ENCODE measurements at regions of chr19 and their contacts with region 1.

Region 1: GRCh38 chr19:58475714-58476497 is at the start of gene ZNF446:
- DNase-seq: peak; percentile 98
- H3K4me3 Mint-ChIP-seq: peak within 1 kb of the TSS; percentile 93
- H3K27ac Mint-ChIP-seq: peak within 1 kb of the TSS; percentile 99
- H3K4me1 Mint-ChIP-seq: peaks cover 16% of the 10 kb centered on the region
- H3K27me3 Mint-ChIP-seq: no peaks in the 10 kb centered on the region
- total RNA-seq, gene ZNF446: 6.4 to 7.5 TPM

Region 2: DNA sequence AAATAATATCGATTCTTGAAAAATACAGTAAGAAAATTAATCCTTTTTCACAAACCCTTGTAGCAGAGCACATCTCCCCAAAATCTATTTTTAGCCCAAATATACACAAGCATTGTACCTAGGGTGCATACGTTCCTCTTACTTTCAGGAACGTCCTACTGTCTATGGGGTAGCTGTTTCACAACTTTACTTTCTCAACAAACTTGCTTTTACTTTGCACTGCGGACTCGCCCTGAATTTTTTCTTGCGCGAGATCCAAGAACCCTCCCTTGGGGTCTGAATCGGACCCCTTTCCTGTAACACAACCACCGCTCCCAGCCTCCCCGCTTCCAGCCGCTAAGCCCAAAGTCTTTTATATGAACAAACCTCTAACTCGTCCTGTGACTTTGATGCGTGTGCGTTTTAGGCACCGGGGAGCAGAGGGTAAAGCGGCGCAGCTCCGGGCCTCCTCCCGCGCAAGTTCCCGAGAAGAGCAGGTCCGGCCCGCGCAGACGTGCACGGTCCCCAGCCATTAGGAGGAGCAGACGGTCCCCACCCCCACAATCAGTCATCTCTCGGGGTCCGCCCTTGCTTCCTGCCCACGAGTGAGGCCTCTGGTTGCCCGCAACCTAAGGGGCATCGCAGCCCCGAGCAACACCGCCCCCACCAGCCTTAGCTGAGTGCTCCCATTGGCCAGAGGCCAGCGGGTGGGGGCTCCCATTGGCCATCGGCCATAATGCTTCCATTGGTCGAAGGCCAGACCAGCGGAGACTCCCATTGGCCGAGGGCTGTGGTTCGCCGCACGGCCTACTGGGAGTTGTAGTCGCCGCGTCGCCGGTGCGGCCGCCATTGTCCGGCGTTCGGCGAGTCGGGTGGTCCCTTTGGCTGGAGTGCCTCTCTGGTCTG is 197.5 kb before region 1 on chr19 and contains the start of gene ZNF8:
- CTCF ChIA-PET with region 1: no interaction called
- POLR2A ChIA-PET with region 1: no interaction called
- intact Hi-C with region 1: loop called (anchors 2 kb)
- DNase-seq: peak; percentile 99
- H3K4me3 Mint-ChIP-seq: peak within 1 kb of the TSS; percentile 83
- H3K27ac Mint-ChIP-seq: peak within 1 kb of the TSS; percentile 95
- H3K4me1 Mint-ChIP-seq: peaks cover 35% of the 10 kb centered on the region
- H3K27me3 Mint-ChIP-seq: no peaks in the 10 kb centered on the region
- total RNA-seq, gene ZNF8: 3.7 to 3.9 TPM

Region 3: GRCh38 chr19:58439576-58440554 is 36.0 kb before region 1 on chr19 and contains the start of gene ZNF132:
- CTCF ChIA-PET with region 1: no interaction called
- POLR2A ChIA-PET with region 1: no interaction called
- intact Hi-C with region 1: loop called (anchors 1 kb)
- DNase-seq: peak; percentile 97
- H3K4me3 Mint-ChIP-seq: peak within 1 kb of the TSS; percentile 84
- H3K27ac Mint-ChIP-seq: peak within 1 kb of the TSS; percentile 71
- H3K4me1 Mint-ChIP-seq: peaks cover 25% of the 10 kb centered on the region
- H3K27me3 Mint-ChIP-seq: no peaks in the 10 kb centered on the region
- total RNA-seq, gene ZNF132: 3.1 to 3.6 TPM

Region 4: DNA sequence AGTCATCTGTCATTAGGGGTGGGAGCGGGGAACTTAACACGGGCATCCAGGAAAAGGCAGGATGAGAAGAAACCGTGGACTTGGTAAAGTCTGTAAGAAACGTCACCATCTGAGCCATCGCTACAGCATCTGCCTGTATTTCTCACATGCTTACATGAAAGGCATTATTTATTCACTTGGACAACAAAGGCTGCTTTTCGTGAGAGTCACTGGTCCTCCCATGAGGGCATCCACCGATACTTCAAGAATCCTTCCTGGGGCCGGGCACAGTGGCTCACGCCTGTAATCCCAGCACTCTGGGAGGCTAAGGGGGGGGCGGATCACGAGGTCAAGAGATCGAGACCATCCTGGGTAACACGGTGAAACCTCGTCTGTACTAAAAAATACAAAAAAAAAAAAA is 16.4 kb after region 1 on chr19:
- CTCF ChIA-PET with region 1: no interaction called
- POLR2A ChIA-PET with region 1: interaction called, 11 read pairs
- intact Hi-C with region 1: loop called (anchors 1 kb)
- DNase-seq: no peak
- H3K4me3 Mint-ChIP-seq: no peak overlapping the region
- H3K27ac Mint-ChIP-seq: no peak overlapping the region
- H3K4me1 Mint-ChIP-seq: peaks cover 30% of the 10 kb centered on the region
- H3K27me3 Mint-ChIP-seq: no peaks in the 10 kb centered on the region

Region 5: GRCh38 chr19:58531034-58531840 is 55.3 kb after region 1 on chr19:
- CTCF ChIA-PET with region 1: no interaction called
- POLR2A ChIA-PET with region 1: no interaction called
- intact Hi-C with region 1: no loop called
- DNase-seq: no peak
- H3K4me3 Mint-ChIP-seq: no peak overlapping the region
- H3K27ac Mint-ChIP-seq: no peak overlapping the region
- H3K4me1 Mint-ChIP-seq: no peaks in the 10 kb centered on the region
- H3K27me3 Mint-ChIP-seq: peaks cover 4% of the 10 kb centered on the region

Region 6: GRCh38 chr19:58543826-58544590 is 68.1 kb after region 1 on chr19 and contains the start of gene TRIM28:
- CTCF ChIA-PET with region 1: no interaction called
- POLR2A ChIA-PET with region 1: no interaction called
- intact Hi-C with region 1: loop called (anchors 1 kb)
- DNase-seq: peak; percentile 100
- H3K4me3 Mint-ChIP-seq: peak within 1 kb of the TSS; percentile 97
- H3K27ac Mint-ChIP-seq: peak within 1 kb of the TSS; percentile 95
- H3K4me1 Mint-ChIP-seq: peaks cover 32% of the 10 kb centered on the region
- H3K27me3 Mint-ChIP-seq: peaks cover 7% of the 10 kb centered on the region
- total RNA-seq, gene TRIM28: 404 to 408 TPM